H1 (cell line): ENCODE measurements at regions of chrX and their contacts with region 1.

Region 1: DNA sequence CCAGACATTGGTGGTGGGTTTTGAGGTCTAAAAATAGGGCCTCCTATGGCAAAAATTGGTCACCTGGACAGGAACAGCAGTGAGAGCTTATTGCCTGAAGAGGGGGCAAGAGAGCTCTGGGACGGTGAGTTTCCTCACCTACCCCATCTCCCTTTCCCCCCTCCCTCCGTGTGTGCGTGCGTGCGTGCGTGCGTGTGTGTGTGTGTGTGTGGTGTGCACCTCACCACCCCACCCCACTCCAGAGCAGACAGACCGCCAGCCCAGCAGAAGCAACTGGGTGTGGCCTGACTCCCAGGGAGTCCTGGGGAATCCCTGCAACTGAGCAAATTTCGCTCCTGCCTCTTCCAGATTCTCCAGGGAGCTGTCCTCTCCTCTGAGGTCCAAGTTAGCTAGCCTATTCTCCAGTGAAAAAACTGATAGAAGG is 44.7 kb downstream of the PRPS1 start:
- DNase-seq: peak in 1 of 2 experiments; percentile 56
- H3K4me3 ChIP-seq: 0 out of 8 replicates have a peak overlapping the region, but pooled peaks of 1 of the 4 experiments have one; percentile 21
- H3K27ac ChIP-seq: no peak overlapping the region
- H3K4me1 ChIP-seq: peaks cover 0 to 7% (median 1%) of the 10 kb centered on the region in 4 experiments; a peak in 4 of 7 replicates
- H3K27me3 ChIP-seq: no peaks in the 10 kb centered on the region
- CTCF ChIP-seq: peak; percentile 53 to 68 (median 68)
- EP300 ChIP-seq: no peak
- POLR2A ChIP-seq: no peak
- RAD21 ChIP-seq: peak; percentile 72

Region 2: GRCh38 chrX:107654872-107655761 is 17.9 kb before region 1 on chrX:
- CTCF ChIA-PET with region 1: interaction called, 55 read pairs
- POLR2A ChIA-PET with region 1: interaction called, 11 read pairs
- DNase-seq: peak; percentile 50 to 75
- H3K4me3 ChIP-seq: peak overlapping the region in 1 of 4 experiments; percentile 48; a peak in 1 of 8 replicates
- H3K27ac ChIP-seq: no peak overlapping the region; the same call in 1 of the 2 replicates
- H3K4me1 ChIP-seq: peaks cover 0 to 5% (median 0%) of the 10 kb centered on the region in 4 experiments; a peak in 2 of 7 replicates
- H3K27me3 ChIP-seq: no peaks in the 10 kb centered on the region
- CTCF ChIP-seq: peak; percentile 74 to 89 (median 87)
- EP300 ChIP-seq: peak in 1 of 2 experiments; percentile 32; a peak in 1 of 3 replicates
- POLR2A ChIP-seq: no peak
- RAD21 ChIP-seq: peak; percentile 49 to 59; a peak in 3 of 4 replicates

Region 3: GRCh38 chrX:107683124-107683895 is 10.3 kb after region 1 on chrX:
- CTCF ChIA-PET with region 1: interaction called, 11 read pairs
- POLR2A ChIA-PET with region 1: interaction called, 3 read pairs
- DNase-seq: no peak
- H3K4me3 ChIP-seq: no peak overlapping the region
- H3K27ac ChIP-seq: no peak overlapping the region
- H3K4me1 ChIP-seq: no peaks in the 10 kb centered on the region
- H3K27me3 ChIP-seq: no peaks in the 10 kb centered on the region
- CTCF ChIP-seq: no peak
- EP300 ChIP-seq: no peak
- POLR2A ChIP-seq: no peak
- RAD21 ChIP-seq: no peak

Region 4: GRCh38 chrX:107731831-107732502 is 59.0 kb after region 1 on chrX:
- CTCF ChIA-PET with region 1: interaction called, 325 read pairs
- POLR2A ChIA-PET with region 1: interaction called, 4 read pairs
- DNase-seq: no peak
- H3K4me3 ChIP-seq: no peak overlapping the region
- H3K27ac ChIP-seq: no peak overlapping the region; the same call in 1 of the 2 replicates
- H3K4me1 ChIP-seq: peaks cover 0 to 19% (median 10%) of the 10 kb centered on the region in 4 experiments; a peak in 6 of 7 replicates
- H3K27me3 ChIP-seq: no peaks in the 10 kb centered on the region
- CTCF ChIP-seq: no peak
- EP300 ChIP-seq: no peak
- POLR2A ChIP-seq: 0 out of 3 replicates have a peak, but pooled peaks of 1 of the 2 experiments have one; percentile 32
- RAD21 ChIP-seq: no peak

Region 5: DNA sequence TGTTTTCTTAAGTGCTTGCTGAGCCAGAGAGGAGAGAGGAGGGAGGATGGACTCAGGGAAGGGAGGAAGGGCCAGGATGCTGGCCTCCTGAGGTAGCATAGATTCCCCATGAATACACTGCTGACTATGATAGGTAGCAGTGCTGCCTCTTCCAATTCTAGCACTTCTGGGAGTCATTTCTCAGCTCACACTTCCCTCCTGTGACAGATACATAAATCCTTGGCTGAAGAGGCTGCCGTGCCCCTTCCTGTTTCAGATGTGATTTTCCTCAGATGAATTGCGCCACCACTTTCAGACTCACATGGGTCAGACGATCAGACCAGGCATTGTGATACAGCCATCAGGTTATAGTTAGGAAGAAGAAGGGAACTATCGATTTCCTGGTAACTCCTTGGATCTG is 80.2 kb after region 1 on chrX:
- CTCF ChIA-PET with region 1: interaction called, 19 read pairs
- POLR2A ChIA-PET with region 1: no interaction called
- DNase-seq: no peak
- H3K4me3 ChIP-seq: no peak overlapping the region
- H3K27ac ChIP-seq: no peak overlapping the region
- H3K4me1 ChIP-seq: peaks cover 0 to 9% (median 2%) of the 10 kb centered on the region in 4 experiments; a peak in 4 of 7 replicates
- H3K27me3 ChIP-seq: no peaks in the 10 kb centered on the region
- CTCF ChIP-seq: no peak
- EP300 ChIP-seq: no peak
- POLR2A ChIP-seq: no peak
- RAD21 ChIP-seq: no peak

Region 6: GRCh38 chrX:107871136-107871535 is 198.2 kb after region 1 on chrX:
- CTCF ChIA-PET with region 1: no interaction called
- POLR2A ChIA-PET with region 1: no interaction called
- DNase-seq: no peak
- H3K4me3 ChIP-seq: no peak overlapping the region
- H3K27ac ChIP-seq: no peak overlapping the region
- H3K4me1 ChIP-seq: no peaks in the 10 kb centered on the region
- H3K27me3 ChIP-seq: no peaks in the 10 kb centered on the region
- CTCF ChIP-seq: peak in 1 of 3 experiments; percentile 13; a peak in 1 of 4 replicates
- EP300 ChIP-seq: no peak
- POLR2A ChIP-seq: no peak
- RAD21 ChIP-seq: no peak

Region 7: DNA sequence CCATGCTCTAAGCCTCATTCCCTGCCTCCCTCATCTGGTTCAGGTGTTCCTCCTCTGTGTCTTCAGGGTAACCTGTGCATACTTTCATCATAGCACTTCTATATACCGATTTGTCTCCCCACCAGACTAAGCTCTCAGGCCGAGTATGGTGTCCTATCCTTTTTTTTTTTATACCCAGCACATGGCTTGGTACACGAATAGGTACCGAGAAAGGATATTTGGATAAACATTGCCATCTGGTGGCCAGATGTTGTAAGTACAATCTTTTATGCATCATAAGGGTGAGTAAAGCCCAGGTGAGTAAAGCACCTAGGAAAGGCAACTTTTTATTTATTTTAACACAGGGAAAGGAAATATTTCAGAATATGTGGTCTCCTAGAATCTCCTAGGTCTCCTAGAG is 221.1 kb after region 1 on chrX:
- CTCF ChIA-PET with region 1: interaction called, 21 read pairs
- POLR2A ChIA-PET with region 1: no interaction called
- DNase-seq: peak in 1 of 2 experiments; percentile 39
- H3K4me3 ChIP-seq: no peak overlapping the region
- H3K27ac ChIP-seq: no peak overlapping the region
- H3K4me1 ChIP-seq: no peaks in the 10 kb centered on the region
- H3K27me3 ChIP-seq: no peaks in the 10 kb centered on the region
- CTCF ChIP-seq: peak in 2 of 3 experiments; percentile 37 to 43; a peak in 2 of 4 replicates
- EP300 ChIP-seq: no peak
- POLR2A ChIP-seq: no peak
- RAD21 ChIP-seq: peak; percentile 72 to 80